Calu3 (cell line): ENCODE measurements at regions of chr20 and their contacts with region 1.

Region 1: GRCh38 chr20:33791959-33792597 is 19.1 kb upstream of the CHMP4B start:
- DNase-seq: peak; percentile 86
- H3K4me3 Mint-ChIP-seq: no peak overlapping the region
- H3K27ac Mint-ChIP-seq: peak overlapping the region; percentile 78
- H3K4me1 Mint-ChIP-seq: peaks cover 88% of the 10 kb centered on the region
- H3K27me3 Mint-ChIP-seq: no peaks in the 10 kb centered on the region
- CTCF ChIP-seq: peak; percentile 99

Region 2: DNA sequence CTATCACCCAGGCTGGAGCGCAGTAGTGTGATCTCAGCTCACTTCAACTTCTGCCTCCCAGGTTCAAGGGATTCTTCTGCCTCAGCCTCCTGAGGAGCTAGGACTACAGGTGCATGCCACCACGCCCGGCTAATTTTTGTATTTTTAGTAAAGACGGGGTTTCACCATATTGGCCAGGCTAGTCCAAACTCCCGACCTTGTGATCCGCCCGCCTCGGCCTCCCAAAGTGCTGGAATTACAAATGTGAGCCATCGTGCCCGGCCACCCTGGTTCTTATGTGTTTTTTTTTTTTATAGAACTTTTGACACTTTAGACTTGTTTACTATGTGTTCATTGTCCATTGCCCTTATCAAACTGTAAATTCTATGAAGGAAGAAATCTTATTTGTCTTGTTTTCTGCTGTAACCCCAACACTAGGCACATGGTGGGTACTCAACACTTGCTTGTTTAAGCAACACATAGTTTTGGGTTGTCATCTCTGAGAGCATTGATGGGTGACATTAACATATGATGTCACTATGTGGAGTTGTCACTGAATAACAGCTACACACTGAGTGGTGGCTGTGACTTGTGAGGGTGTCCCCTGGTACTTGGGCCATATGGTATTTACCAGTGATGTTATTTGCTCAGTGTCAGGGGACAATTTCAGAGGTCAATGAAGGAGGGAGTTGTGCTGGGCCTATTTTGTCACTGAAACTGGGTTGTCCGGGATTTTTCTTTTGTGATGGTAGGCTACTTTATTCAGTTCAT is 70.5 kb before region 1 on chr20:
- CTCF ChIA-PET with region 1: interaction called, 10 read pairs
- intact Hi-C with region 1: no loop called
- DNase-seq: no peak
- H3K4me3 Mint-ChIP-seq: peak overlapping the region; percentile 62
- H3K27ac Mint-ChIP-seq: peak overlapping the region; percentile 25
- H3K4me1 Mint-ChIP-seq: peaks cover 15% of the 10 kb centered on the region
- H3K27me3 Mint-ChIP-seq: no peaks in the 10 kb centered on the region
- CTCF ChIP-seq: no peak

Region 3: GRCh38 chr20:33744773-33745385 is 47.2 kb before region 1 on chr20:
- CTCF ChIA-PET with region 1: interaction called, 5 read pairs
- intact Hi-C with region 1: loop called (anchors 1 kb)
- DNase-seq: no peak
- H3K4me3 Mint-ChIP-seq: no peak overlapping the region
- H3K27ac Mint-ChIP-seq: no peak overlapping the region
- H3K4me1 Mint-ChIP-seq: peaks cover 20% of the 10 kb centered on the region
- H3K27me3 Mint-ChIP-seq: no peaks in the 10 kb centered on the region
- CTCF ChIP-seq: no peak

Region 4: DNA sequence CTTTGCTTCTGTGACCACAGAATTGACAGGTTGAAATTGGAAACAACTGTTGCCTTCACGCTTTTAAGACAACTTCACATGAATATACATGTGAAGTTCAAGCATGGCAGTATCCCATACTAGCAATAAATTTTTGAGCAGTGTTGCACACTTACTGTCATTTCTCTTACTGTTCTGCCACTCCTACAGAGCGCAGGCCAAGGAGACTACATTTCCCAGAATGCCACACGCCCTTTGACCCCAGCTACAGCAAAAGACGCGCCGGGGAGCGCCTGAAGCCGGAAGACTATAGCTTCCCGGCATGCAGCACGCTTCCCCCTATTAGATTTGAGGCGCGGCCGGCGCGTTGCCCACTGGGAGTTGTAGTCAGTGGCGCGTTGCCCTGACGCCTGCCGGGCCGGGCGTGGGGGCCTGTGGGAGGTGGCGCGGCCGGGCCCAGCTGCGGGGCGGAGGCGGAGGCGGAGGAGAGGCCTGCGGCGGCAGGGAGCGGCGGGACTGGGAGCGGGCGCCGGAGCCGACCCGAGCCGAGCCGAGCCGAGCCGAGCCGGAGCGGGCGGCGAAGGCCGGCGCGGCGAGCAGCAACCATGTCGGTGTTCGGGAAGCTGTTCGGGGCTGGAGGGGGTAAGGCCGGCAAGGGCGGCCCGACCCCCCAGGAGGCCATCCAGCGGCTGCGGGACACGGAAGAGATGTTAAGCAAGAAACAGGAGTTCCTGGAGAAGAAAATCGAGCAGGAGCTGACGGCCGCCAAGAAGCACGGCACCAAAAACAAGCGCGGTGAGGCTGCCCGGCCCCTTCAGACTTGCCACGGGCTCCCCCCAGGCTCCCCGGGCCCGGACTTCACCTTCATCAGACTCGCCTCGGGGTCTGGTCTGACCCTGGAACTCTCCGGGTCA is 19.1 kb after region 1 on chr20 and contains the start of gene CHMP4B:
- CTCF ChIA-PET with region 1: interaction called, 38 read pairs
- intact Hi-C with region 1: loop called (anchors 2 kb)
- DNase-seq: peak; percentile 100
- H3K4me3 Mint-ChIP-seq: peak within 1 kb of the TSS; percentile 69
- H3K27ac Mint-ChIP-seq: peak within 1 kb of the TSS; percentile 97
- H3K4me1 Mint-ChIP-seq: peaks cover 38% of the 10 kb centered on the region
- H3K27me3 Mint-ChIP-seq: no peaks in the 10 kb centered on the region
- CTCF ChIP-seq: no peak
- total RNA-seq, gene CHMP4B: 234 and 245 TPM in 2 replicates

Region 5: GRCh38 chr20:33915726-33916331 is 123.8 kb after region 1 on chr20:
- CTCF ChIA-PET with region 1: interaction called, 3 read pairs
- intact Hi-C with region 1: loop called (anchors 10 kb)
- DNase-seq: peak; percentile 81
- H3K4me3 Mint-ChIP-seq: no peak overlapping the region
- H3K27ac Mint-ChIP-seq: no peak overlapping the region
- H3K4me1 Mint-ChIP-seq: peaks cover 31% of the 10 kb centered on the region
- H3K27me3 Mint-ChIP-seq: no peaks in the 10 kb centered on the region
- CTCF ChIP-seq: peak; percentile 89

Region 6: DNA sequence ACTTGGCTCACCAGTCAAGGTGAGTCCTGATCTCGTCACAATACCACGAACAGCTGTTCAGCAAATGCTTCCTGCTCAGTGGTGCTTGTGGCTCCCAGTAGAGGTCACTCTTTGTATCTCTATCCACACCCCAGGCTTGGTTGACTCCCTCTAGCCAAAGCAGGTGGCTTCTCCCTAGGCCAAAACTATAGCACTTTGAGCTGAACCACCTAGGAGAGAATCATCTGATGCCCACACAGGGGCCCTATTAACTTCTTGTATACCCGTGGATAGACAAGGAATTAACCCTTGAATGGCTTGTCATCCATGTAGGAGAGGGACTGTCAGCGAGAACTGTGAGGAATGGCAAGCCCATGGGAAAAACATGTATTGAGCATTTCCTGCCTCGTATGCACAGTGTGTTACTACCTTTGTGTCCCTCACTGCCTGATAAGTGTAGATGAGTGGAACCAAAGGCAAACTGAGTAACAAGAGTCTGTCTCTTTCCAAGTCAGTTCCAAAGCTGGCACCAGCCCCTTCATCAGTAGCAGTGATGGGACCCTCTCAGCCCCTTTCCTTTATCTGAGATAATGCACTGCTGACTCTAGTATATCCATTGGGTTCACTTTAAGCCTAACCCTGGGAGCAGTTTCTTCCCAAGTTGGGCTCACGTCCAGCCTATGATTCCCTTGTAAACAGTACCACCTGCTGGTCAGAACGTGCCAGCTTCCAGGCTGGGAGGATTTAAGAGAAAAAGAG is 277.4 kb after region 1 on chr20:
- CTCF ChIA-PET with region 1: interaction called, 5 read pairs
- intact Hi-C with region 1: loop called (anchors 5 kb)
- DNase-seq: peak; percentile 84
- H3K4me3 Mint-ChIP-seq: no peak overlapping the region
- H3K27ac Mint-ChIP-seq: peak overlapping the region; percentile 39
- H3K4me1 Mint-ChIP-seq: peaks cover 49% of the 10 kb centered on the region
- H3K27me3 Mint-ChIP-seq: no peaks in the 10 kb centered on the region
- CTCF ChIP-seq: peak; percentile 87